ENCODE measurements at regions of chr12 and their contacts with region 1.

Region 1: GRCh38 chr12:13661005-13661887 is 320.2 kb downstream of the GRIN2B start:
- DNase-seq: no peak
- H3K4me3 Mint-ChIP-seq: no peak overlapping the region
- H3K27ac Mint-ChIP-seq: no peak overlapping the region
- H3K4me1 Mint-ChIP-seq: no peaks in the 10 kb centered on the region
- H3K27me3 Mint-ChIP-seq: peaks cover 6% of the 10 kb centered on the region

Region 2: GRCh38 chr12:12916135-12916944 is 744.9 kb before region 1 on chr12:
- intact Hi-C with region 1: loop called (anchors 5 kb)
- DNase-seq: peak; percentile 76
- H3K4me3 Mint-ChIP-seq: no peak overlapping the region
- H3K27ac Mint-ChIP-seq: no peak overlapping the region
- H3K4me1 Mint-ChIP-seq: peaks cover 11% of the 10 kb centered on the region
- H3K27me3 Mint-ChIP-seq: peaks cover 14% of the 10 kb centered on the region

Region 3: DNA sequence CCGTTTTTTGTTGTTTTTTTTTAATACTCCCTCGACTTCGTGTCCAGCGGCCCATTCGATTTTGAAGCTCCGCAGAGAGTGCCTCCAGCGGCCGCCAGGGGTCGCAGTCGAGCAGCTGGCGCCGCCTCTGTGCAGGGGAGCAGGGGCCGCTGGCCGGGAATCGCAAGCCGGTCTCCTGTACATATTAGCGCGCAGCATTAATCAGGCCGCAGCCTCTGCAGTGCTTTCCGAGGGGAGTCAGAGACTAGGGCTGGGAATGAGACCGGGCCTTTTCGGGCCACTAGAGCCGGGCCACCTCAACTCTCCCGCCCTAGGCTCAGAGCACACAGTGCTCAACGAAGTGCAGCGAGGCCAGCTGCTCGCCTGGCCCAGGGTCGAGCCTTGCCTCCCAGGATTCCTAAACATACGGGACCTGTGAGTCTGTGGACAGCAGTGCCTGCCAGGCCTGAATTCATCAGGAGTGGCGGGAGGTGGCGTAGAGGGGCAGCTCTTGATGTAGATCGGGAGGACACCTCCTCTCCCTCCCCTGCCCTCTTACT is 382.9 kb before region 1 on chr12:
- intact Hi-C with region 1: loop called (anchors 5 kb)
- DNase-seq: peak; percentile 32
- H3K4me3 Mint-ChIP-seq: no peak overlapping the region
- H3K27ac Mint-ChIP-seq: no peak overlapping the region
- H3K4me1 Mint-ChIP-seq: no peaks in the 10 kb centered on the region
- H3K27me3 Mint-ChIP-seq: peaks cover 18% of the 10 kb centered on the region

Region 4: GRCh38 chr12:13362260-13362841 is 298.9 kb before region 1 on chr12:
- intact Hi-C with region 1: loop called (anchors 5 kb)
- DNase-seq: no peak
- H3K4me3 Mint-ChIP-seq: no peak overlapping the region
- H3K27ac Mint-ChIP-seq: no peak overlapping the region
- H3K4me1 Mint-ChIP-seq: no peaks in the 10 kb centered on the region
- H3K27me3 Mint-ChIP-seq: peaks cover 22% of the 10 kb centered on the region

Region 5: DNA sequence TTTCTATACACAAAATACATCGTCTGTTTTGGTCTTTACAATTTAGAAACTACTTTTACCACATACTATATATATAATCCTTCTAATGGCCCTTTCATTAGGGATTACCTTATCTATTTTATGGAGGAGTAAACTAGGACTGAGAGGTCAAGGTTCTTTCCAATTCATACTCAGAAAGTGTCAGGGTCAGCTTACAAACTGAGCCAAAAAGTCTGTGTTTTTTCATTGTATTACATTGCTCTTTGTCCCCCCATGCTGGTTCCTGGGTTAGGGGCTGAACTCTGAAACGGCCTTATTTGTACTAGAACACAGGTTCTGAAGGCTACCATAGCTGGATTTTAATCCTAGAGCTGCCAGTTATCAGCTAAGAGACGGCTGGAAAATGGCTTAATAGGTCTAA is 47.9 kb before region 1 on chr12:
- intact Hi-C with region 1: no loop called
- DNase-seq: no peak
- H3K4me3 Mint-ChIP-seq: no peak overlapping the region
- H3K27ac Mint-ChIP-seq: no peak overlapping the region
- H3K4me1 Mint-ChIP-seq: no peaks in the 10 kb centered on the region
- H3K27me3 Mint-ChIP-seq: no peaks in the 10 kb centered on the region

Measured in activated T-helper 1 cell treated with anti-CD3 and anti-CD28 coated beads, Interleukin-12 subunit alpha, Interleukin-12 subunit beta, Interleukin-2, Interleukin-4 antibody, amounts not matched to agents 30 ng/mL and 10 ng/mL and 1 ng/mL, durations not matched to agents 14 hours and 24 hours and 36 hours (primary cell).